AG04449 (cell line): ENCODE measurements at regions of chr10 and their contacts with region 1.

Region 1: GRCh38 chr10:133509700-133510099 is 17.5 kb upstream of the CYP2E1 start:
- DNase-seq: no peak
- H3K4me3 ChIP-seq: no peak overlapping the region
- CTCF ChIP-seq: no peak

Region 2: DNA sequence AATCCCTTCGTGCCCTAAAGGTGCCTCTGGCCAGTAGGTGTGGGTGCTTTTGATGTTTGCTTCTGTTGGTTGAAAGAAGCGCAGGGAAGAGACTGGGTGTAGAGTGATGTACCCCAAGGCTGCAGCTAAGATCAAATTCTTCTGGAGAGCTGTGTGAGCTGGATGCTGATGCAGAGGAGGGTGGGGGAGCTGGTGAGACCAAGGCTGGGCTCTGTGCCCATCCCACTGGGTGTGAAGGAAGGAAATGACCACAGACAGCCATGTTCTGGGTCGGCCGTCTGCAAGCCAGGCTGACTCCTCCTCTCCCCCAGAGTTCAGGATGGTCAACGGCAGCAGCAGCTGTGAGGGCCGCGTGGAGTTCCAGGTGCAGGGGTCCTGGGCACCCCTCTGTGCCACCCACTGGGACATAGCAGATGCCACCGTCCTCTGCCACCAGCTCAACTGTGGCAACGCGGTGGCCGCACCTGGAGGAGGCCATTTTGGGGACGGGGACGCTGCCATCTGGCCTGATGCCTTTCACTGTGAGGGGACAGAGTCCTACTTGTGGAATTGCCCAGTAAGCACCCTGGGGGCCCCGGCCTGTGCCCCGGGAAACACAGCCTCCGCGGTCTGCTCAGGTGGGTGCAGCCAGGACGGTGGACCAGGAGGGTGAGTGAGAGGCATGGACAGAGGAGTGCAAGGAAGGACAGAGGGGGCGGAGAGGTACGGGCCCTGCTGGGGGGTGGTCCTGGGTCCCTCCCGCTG is 50.8 kb before region 1 on chr10:
- CTCF ChIA-PET with region 1: no interaction called
- POLR2A ChIA-PET with region 1: no interaction called
- DNase-seq: no peak
- H3K4me3 ChIP-seq: no peak overlapping the region
- CTCF ChIP-seq: no peak

Region 3: GRCh38 chr10:133489816-133490588 is 19.7 kb before region 1 on chr10:
- CTCF ChIA-PET with region 1: no interaction called
- POLR2A ChIA-PET with region 1: no interaction called
- DNase-seq: no peak
- H3K4me3 ChIP-seq: no peak overlapping the region
- CTCF ChIP-seq: no peak

Region 4: GRCh38 chr10:133520155-133520738 is 10.5 kb after region 1 on chr10:
- CTCF ChIA-PET with region 1: interaction called, 23 read pairs
- POLR2A ChIA-PET with region 1: no interaction called
- DNase-seq: no peak
- H3K4me3 ChIP-seq: peak overlapping the region; percentile 61
- CTCF ChIP-seq: peak; percentile 93